H1 (cell line): ENCODE measurements at regions of chr5 and their contacts with region 1.

Region 1: GRCh38 chr5:142655339-142656267 is 30.3 kb downstream of the FGF1 start:
- DNase-seq: peak; percentile 53 to 96
- H3K4me3 ChIP-seq: no peak overlapping the region
- H3K27ac ChIP-seq: no peak overlapping the region
- H3K4me1 ChIP-seq: no peaks in the 10 kb centered on the region
- H3K27me3 ChIP-seq: no peaks in the 10 kb centered on the region
- CTCF ChIP-seq: peak; percentile 98 to 99 (median 99)
- EP300 ChIP-seq: no peak
- POLR2A ChIP-seq: no peak
- RAD21 ChIP-seq: peak; percentile 98

Region 2: GRCh38 chr5:142353071-142353472 is 302.5 kb before region 1 on chr5:
- CTCF ChIA-PET with region 1: no interaction called
- POLR2A ChIA-PET with region 1: no interaction called
- DNase-seq: no peak
- H3K4me3 ChIP-seq: no peak overlapping the region
- H3K27ac ChIP-seq: no peak overlapping the region
- H3K4me1 ChIP-seq: peaks cover 4 to 15% (median 10%) of the 10 kb centered on the region in 4 experiments; a peak in 6 of 7 replicates
- H3K27me3 ChIP-seq: no peaks in the 10 kb centered on the region
- CTCF ChIP-seq: no peak
- EP300 ChIP-seq: no peak
- POLR2A ChIP-seq: no peak
- RAD21 ChIP-seq: no peak

Region 3: GRCh38 chr5:142611154-142611553 is 44.4 kb before region 1 on chr5:
- CTCF ChIA-PET with region 1: interaction called, 68 read pairs
- POLR2A ChIA-PET with region 1: no interaction called
- DNase-seq: peak; percentile 49 to 93
- H3K4me3 ChIP-seq: no peak overlapping the region
- H3K27ac ChIP-seq: no peak overlapping the region
- H3K4me1 ChIP-seq: no peaks in the 10 kb centered on the region
- H3K27me3 ChIP-seq: no peaks in the 10 kb centered on the region
- CTCF ChIP-seq: peak; percentile 78 to 94 (median 90)
- EP300 ChIP-seq: no peak
- POLR2A ChIP-seq: no peak
- RAD21 ChIP-seq: peak; percentile 92 to 94

Region 4: GRCh38 chr5:142636076-142636475 is 19.5 kb before region 1 on chr5:
- CTCF ChIA-PET with region 1: interaction called, 81 read pairs
- POLR2A ChIA-PET with region 1: interaction called, 3 read pairs
- DNase-seq: no peak
- H3K4me3 ChIP-seq: no peak overlapping the region
- H3K27ac ChIP-seq: no peak overlapping the region
- H3K4me1 ChIP-seq: no peaks in the 10 kb centered on the region
- H3K27me3 ChIP-seq: no peaks in the 10 kb centered on the region
- CTCF ChIP-seq: no peak
- EP300 ChIP-seq: no peak
- POLR2A ChIP-seq: no peak
- RAD21 ChIP-seq: no peak

Region 5: DNA sequence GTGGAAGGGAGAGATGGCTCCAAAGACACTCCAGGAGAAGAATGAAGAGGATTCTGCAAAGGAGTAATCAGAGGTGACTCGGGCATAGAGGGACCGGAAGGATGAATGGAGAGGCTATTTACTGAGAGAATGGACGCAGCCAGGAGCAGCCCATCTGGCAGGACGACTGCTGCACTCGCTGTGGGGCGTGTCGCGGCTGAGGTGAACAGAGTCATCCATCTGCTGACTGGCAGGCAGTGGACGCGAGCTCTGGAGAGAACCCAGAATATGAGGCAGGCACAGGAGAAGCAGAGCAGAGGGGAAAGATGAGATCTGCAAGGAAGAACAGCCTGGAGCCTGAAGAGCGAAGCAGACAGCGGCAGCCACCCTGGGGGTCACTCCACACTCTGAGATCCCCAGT is 13.9 kb after region 1 on chr5:
- CTCF ChIA-PET with region 1: interaction called, 27 read pairs
- POLR2A ChIA-PET with region 1: no interaction called
- DNase-seq: no peak
- H3K4me3 ChIP-seq: no peak overlapping the region
- H3K27ac ChIP-seq: no peak overlapping the region
- H3K4me1 ChIP-seq: peaks cover 0 to 4% (median 0%) of the 10 kb centered on the region in 4 experiments; a peak in 1 of 7 replicates
- H3K27me3 ChIP-seq: no peaks in the 10 kb centered on the region; a peak in 3 of 7 replicates
- CTCF ChIP-seq: no peak
- EP300 ChIP-seq: no peak
- POLR2A ChIP-seq: no peak
- RAD21 ChIP-seq: no peak

Region 6: DNA sequence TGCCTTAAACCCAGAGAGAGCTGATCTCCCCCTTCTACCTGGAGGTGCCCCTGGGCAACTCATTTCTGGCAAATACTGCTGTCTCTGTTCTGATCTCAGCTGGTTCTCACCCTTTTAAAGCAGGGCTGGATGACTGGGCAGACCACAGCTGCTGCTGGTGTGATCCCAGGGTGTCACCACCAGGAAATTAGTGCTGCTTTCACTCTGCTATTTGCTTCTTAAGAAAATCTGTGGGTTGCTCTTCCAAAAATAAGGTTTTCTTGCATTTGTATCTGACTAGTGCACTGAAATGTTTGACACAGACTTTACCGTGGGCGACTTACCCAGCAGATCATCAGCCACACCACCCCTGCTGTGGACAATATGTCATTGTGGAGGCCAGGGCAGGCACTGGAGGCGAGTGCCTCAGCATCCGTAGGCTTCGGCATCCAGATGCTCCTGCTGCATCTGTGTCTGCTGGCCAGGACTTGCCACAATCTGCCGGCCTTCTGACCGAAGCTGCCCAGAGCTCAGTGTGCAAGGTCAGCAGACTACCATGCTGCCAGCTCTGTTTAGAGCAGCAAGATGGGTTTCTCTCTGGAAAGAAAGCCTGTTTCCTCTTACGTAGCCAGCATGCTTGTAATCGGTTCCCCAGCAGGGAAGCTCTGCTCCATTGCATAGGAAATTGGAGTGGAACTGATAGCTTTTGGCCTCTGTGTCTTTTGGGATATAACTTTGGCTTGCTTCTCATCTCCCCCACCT is 128.2 kb after region 1 on chr5:
- CTCF ChIA-PET with region 1: no interaction called
- POLR2A ChIA-PET with region 1: no interaction called
- DNase-seq: no peak
- H3K4me3 ChIP-seq: no peak overlapping the region
- H3K27ac ChIP-seq: no peak overlapping the region
- H3K4me1 ChIP-seq: peaks cover 14 to 25% (median 17%) of the 10 kb centered on the region in 4 experiments
- H3K27me3 ChIP-seq: no peaks in the 10 kb centered on the region
- CTCF ChIP-seq: no peak
- EP300 ChIP-seq: no peak
- POLR2A ChIP-seq: no peak
- RAD21 ChIP-seq: no peak

Region 7: GRCh38 chr5:142881076-142881783 is 225.6 kb after region 1 on chr5:
- CTCF ChIA-PET with region 1: interaction called, 13 read pairs
- POLR2A ChIA-PET with region 1: no interaction called
- DNase-seq: no peak
- H3K4me3 ChIP-seq: peak overlapping the region in 1 of 4 experiments; percentile 29; a peak in 1 of 8 replicates
- H3K27ac ChIP-seq: 0 out of 2 replicates have a peak overlapping the region, but pooled peaks have one; percentile 6
- H3K4me1 ChIP-seq: peaks cover 10 to 22% (median 15%) of the 10 kb centered on the region in 4 experiments
- H3K27me3 ChIP-seq: no peaks in the 10 kb centered on the region
- CTCF ChIP-seq: no peak
- EP300 ChIP-seq: no peak
- POLR2A ChIP-seq: no peak
- RAD21 ChIP-seq: no peak